Panc1 (cell line): ENCODE measurements at regions of chr11 and their contacts with region 1.

Region 1: DNA sequence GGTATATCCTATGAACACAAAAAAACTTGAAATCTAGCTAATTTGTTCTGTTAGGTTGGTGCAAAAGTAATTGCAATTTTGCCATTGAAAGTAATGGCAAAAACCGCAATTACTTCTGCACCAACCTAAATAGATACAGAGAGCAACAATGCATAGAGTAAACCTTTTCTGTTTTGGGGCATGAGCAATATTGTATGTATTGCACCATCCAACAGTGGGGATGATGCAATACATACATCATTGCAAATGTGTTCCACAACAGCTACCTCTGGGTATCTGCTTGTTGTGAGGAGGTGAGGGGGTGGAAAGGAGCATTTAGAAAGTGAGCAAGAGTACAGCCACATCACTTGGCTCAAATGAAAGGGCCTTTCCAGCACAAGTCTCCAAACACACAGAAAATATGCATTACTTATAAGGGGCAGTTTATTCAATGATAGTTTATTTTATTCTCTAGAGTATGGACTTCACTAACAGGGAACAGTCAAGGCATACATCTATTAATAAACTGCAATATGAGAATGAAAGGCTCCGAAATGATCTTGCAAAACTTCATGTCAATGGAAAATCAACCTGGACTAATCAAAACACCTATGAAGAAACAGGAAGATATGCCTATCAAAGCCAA is 77.3 kb downstream of the DEUP1 start:
- DNase-seq: no peak
- ATAC-seq: no peak
- H3K4me3 ChIP-seq: no peak overlapping the region
- H3K27ac ChIP-seq: no peak overlapping the region
- H3K4me1 ChIP-seq: no peaks in the 10 kb centered on the region
- H3K27me3 ChIP-seq: peaks cover 8% of the 10 kb centered on the region; the same call in 1 of the 2 replicates
- CTCF ChIP-seq: no peak

Region 2: GRCh38 chr11:93942176-93942575 is 534.3 kb after region 1 on chr11:
- CTCF ChIA-PET with region 1: no interaction called
- POLR2A ChIA-PET with region 1: interaction called, 14 read pairs
- in situ Hi-C with region 1: no loop called
- intact Hi-C with region 1: no loop called
- DNase-seq: no peak
- ATAC-seq: no peak
- H3K4me3 ChIP-seq: no peak overlapping the region
- H3K27ac ChIP-seq: no peak overlapping the region
- H3K4me1 ChIP-seq: no peaks in the 10 kb centered on the region
- H3K27me3 ChIP-seq: no peaks in the 10 kb centered on the region; the same call in 1 of the 2 replicates
- CTCF ChIP-seq: no peak